ENCODE measurements at regions of chr19 and their contacts with region 1.

Region 1: DNA sequence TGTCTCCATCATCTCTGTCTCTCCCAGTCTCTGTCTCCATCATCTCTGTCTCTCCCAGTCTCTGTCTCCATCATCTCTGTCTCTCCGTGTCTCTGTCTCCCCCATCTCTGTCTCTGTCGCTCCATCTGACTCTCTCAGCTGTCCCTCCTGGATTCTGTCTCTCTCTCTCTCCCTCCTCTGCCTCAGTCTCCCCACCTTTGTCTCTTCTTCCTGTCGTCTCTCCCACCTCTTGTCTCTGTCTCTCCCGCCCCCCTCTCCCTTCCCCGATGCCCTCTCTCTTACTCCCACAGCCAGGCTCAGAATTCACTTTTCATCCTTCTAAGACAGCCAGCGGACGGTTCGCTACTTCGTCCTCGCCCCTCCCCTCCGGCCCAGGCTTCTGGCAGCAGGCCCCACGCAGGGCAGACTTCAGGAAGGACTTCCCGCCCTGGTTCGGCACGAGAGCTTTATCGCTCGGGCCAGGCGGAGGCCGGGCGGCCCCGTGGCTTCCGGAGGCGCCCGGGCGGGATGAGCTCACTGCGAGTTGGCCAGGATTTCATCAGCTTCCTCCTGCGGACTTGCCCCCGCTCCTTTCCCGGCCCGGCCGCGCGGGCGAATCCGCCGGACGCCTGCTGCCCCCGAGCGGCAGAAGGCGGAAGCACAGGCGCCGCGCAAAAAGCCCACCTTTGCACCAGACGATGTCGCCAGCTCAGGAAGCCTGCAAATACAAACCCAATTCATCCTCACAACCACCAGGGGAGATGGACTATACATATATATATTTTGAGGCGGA is 12.4 kb upstream of the CCDC9 start:
- DNase-seq: peak; percentile 96
- ATAC-seq: peak; percentile 74
- H3K4me3 Mint-ChIP-seq: no peak overlapping the region
- H3K27ac Mint-ChIP-seq: peak overlapping the region; percentile 97
- H3K4me1 Mint-ChIP-seq: peaks cover 35% of the 10 kb centered on the region
- H3K27me3 Mint-ChIP-seq: peaks cover 2% of the 10 kb centered on the region

Region 2: GRCh38 chr19:46860125-46860845 is 383.7 kb before region 1 on chr19:
- CTCF ChIA-PET with region 1: no interaction called
- POLR2A ChIA-PET with region 1: no interaction called
- intact Hi-C with region 1: loop called (anchors 1 to 10 kb)
- DNase-seq: peak; percentile 99
- ATAC-seq: peak; percentile 82
- H3K4me3 Mint-ChIP-seq: no peak overlapping the region
- H3K27ac Mint-ChIP-seq: peak overlapping the region; percentile 78
- H3K4me1 Mint-ChIP-seq: peaks cover 25% of the 10 kb centered on the region
- H3K27me3 Mint-ChIP-seq: no peaks in the 10 kb centered on the region

Region 3: GRCh38 chr19:47075179-47075810 is 168.7 kb before region 1 on chr19:
- CTCF ChIA-PET with region 1: interaction called, 7 read pairs
- POLR2A ChIA-PET with region 1: no interaction called
- intact Hi-C with region 1: loop called in 1 of 2 experiments (anchors 1 kb)
- DNase-seq: no peak
- ATAC-seq: no peak
- H3K4me3 Mint-ChIP-seq: no peak overlapping the region
- H3K27ac Mint-ChIP-seq: no peak overlapping the region
- H3K4me1 Mint-ChIP-seq: peaks cover 3% of the 10 kb centered on the region
- H3K27me3 Mint-ChIP-seq: no peaks in the 10 kb centered on the region

Region 4: GRCh38 chr19:47145639-47146486 is 98.1 kb before region 1 on chr19:
- CTCF ChIA-PET with region 1: interaction called, 48 read pairs
- POLR2A ChIA-PET with region 1: interaction called, 6 read pairs
- intact Hi-C with region 1: loop called (anchors 1 kb)
- DNase-seq: no peak
- ATAC-seq: peak; percentile 24
- H3K4me3 Mint-ChIP-seq: no peak overlapping the region
- H3K27ac Mint-ChIP-seq: peak overlapping the region; percentile 89
- H3K4me1 Mint-ChIP-seq: peaks cover 83% of the 10 kb centered on the region
- H3K27me3 Mint-ChIP-seq: no peaks in the 10 kb centered on the region

Region 5: GRCh38 chr19:47190167-47190727 is 53.7 kb before region 1 on chr19:
- CTCF ChIA-PET with region 1: interaction called, 17 read pairs
- POLR2A ChIA-PET with region 1: interaction called, 12 read pairs
- intact Hi-C with region 1: loop called (anchors 1 to 2 kb)
- DNase-seq: peak; percentile 84
- ATAC-seq: peak; percentile 57
- H3K4me3 Mint-ChIP-seq: peak overlapping the region; percentile 48
- H3K27ac Mint-ChIP-seq: peak overlapping the region; percentile 84
- H3K4me1 Mint-ChIP-seq: peaks cover 71% of the 10 kb centered on the region
- H3K27me3 Mint-ChIP-seq: no peaks in the 10 kb centered on the region

Region 6: DNA sequence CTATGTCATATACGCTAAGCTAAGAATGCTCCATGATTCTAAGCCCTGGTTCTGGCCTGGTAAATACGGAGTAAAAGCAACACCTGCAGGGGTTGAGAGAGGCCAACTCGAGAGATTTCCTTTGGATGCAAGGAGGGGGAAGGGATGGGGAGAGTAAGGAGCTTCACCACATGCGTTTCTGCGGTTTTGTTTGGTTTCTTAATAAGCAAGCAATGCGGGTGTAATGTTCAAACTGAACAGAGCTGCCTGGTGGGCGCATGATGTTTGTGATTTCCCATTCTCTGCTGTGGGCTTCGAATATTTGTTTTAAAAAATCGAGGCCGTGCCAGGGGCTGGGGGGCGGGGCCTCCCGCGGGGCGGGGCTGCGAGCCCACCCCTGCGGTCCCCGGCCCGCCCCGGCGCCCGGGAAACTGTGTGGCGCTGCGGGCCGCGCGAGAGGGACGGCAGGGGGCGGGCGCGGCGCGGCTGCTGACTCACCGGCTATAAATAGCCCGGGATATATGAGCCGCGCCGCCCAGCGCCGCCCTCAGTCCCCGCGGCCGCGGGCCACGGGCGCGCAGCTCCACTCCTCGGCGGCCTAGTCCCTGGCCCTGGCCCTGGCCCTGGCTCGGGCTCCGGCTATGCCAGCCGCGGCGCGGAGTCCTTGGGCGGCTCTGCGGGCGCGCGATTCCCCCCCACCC is 18.1 kb before region 1 on chr19:
- CTCF ChIA-PET with region 1: interaction called, 43 read pairs
- POLR2A ChIA-PET with region 1: interaction called, 24 read pairs
- intact Hi-C with region 1: loop called (anchors 1 kb)
- DNase-seq: peak; percentile 93
- ATAC-seq: peak; percentile 70
- H3K4me3 Mint-ChIP-seq: peak overlapping the region; percentile 77
- H3K27ac Mint-ChIP-seq: no peak overlapping the region
- H3K4me1 Mint-ChIP-seq: peaks cover 16% of the 10 kb centered on the region
- H3K27me3 Mint-ChIP-seq: no peaks in the 10 kb centered on the region